ENCODE measurements at regions of chr7 and their contacts with region 1.

Region 1: GRCh38 chr7:74206589-74207120 is 3.2 kb upstream of the LAT2 start:
- DNase-seq: peak; percentile 58 to 77 (median 68)
- H3K4me3 ChIP-seq: no peak overlapping the region
- H3K4me3 Mint-ChIP-seq: peak overlapping the region in 6 of 8 donors; percentile 21 to 65 (median 54)
- H3K27ac ChIP-seq: no peak overlapping the region
- H3K27ac Mint-ChIP-seq: peak overlapping the region in 1 of 7 donors; percentile 73
- H3K4me1 ChIP-seq: peaks cover 16% of the 10 kb centered on the region
- H3K4me1 Mint-ChIP-seq: peaks cover 7 to 25% (median 13%) of the 10 kb centered on the region in 4 donors
- H3K27me3 ChIP-seq: no peaks in the 10 kb centered on the region
- H3K27me3 Mint-ChIP-seq: no peaks in the 10 kb centered on the region

Region 2: DNA sequence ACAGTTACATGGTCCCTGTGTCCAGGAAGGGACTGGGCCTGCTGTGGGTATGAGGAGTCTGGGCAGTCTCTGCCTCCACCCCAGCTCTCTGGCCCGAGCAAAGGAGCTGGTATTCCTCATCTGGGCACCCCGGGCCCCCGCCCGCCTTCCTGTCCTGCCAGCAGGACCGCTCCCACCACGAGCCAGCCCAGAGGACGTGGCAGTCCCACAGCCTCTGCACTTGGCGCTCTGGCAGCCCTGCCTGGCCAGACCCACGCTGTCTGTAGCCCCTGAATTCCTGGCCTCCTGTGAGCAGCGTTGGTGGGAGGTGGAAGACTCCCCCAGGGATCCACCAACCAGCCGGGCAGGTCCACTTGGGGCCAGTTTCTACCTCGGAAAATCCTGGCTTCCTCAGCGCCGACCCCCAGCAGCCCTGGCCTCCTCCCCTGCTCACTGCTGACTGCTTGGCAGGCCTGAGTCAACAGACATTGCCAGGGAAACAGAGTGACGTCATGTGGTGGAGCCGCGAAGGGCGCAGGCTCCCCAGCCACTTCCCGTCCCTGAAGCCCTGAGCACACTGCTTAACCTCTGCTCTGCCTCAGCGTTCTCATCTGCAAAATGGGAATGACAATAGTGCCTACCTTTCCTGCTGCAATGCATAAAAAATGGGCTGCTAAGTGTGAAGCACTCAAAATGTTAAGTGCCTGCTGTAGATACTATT is 144.7 kb before region 1 on chr7:
- CTCF ChIA-PET with region 1: interaction called, 16 read pairs
- POLR2A ChIA-PET with region 1: no interaction called
- intact Hi-C with region 1: loop called (anchors 1 kb)
- DNase-seq: peak; percentile 76 to 85 (median 83)
- H3K4me3 ChIP-seq: no peak overlapping the region
- H3K4me3 Mint-ChIP-seq: peak overlapping the region; percentile 46 to 78 (median 60)
- H3K27ac ChIP-seq: peak overlapping the region; percentile 46
- H3K27ac Mint-ChIP-seq: peak overlapping the region; percentile 92 to 99 (median 97)
- H3K4me1 ChIP-seq: peaks cover 10% of the 10 kb centered on the region
- H3K4me1 Mint-ChIP-seq: peaks cover 5 to 7% (median 6%) of the 10 kb centered on the region in 4 donors
- H3K27me3 ChIP-seq: no peaks in the 10 kb centered on the region
- H3K27me3 Mint-ChIP-seq: peaks cover 4 to 11% of the 10 kb centered on the region in 2 donors

Region 3: GRCh38 chr7:74173866-74174605 is 32.6 kb before region 1 on chr7 and contains the start of gene EIF4H:
- CTCF ChIA-PET with region 1: interaction called, 20 read pairs
- POLR2A ChIA-PET with region 1: interaction called, 8 read pairs
- intact Hi-C with region 1: no loop called
- DNase-seq: peak; percentile 93 to 95 (median 93)
- H3K4me3 ChIP-seq: peak within 1 kb of the TSS; percentile 87 to 89
- H3K4me3 Mint-ChIP-seq: peak within 1 kb of the TSS; percentile 88 to 94 (median 92)
- H3K27ac ChIP-seq: peak within 1 kb of the TSS; percentile 91
- H3K27ac Mint-ChIP-seq: peak within 1 kb of the TSS; percentile 90 to 97 (median 96)
- H3K4me1 ChIP-seq: peaks cover 48% of the 10 kb centered on the region
- H3K4me1 Mint-ChIP-seq: peaks cover 34 to 57% (median 44%) of the 10 kb centered on the region in 4 donors
- H3K27me3 ChIP-seq: no peaks in the 10 kb centered on the region
- H3K27me3 Mint-ChIP-seq: no peaks in the 10 kb centered on the region
- total RNA-seq, gene EIF4H: 167 to 168 TPM

Region 4: GRCh38 chr7:74193054-74193453 is 13.6 kb before region 1 on chr7:
- CTCF ChIA-PET with region 1: interaction called, 12 read pairs
- POLR2A ChIA-PET with region 1: no interaction called
- intact Hi-C with region 1: no loop called
- DNase-seq: no peak
- H3K4me3 ChIP-seq: no peak overlapping the region
- H3K4me3 Mint-ChIP-seq: no peak overlapping the region
- H3K27ac ChIP-seq: no peak overlapping the region
- H3K27ac Mint-ChIP-seq: peak overlapping the region in 2 of 7 donors; percentile 14 to 63
- H3K4me1 ChIP-seq: no peaks in the 10 kb centered on the region
- H3K4me1 Mint-ChIP-seq: peaks cover under 1 to 6% (median 3%) of the 10 kb centered on the region in 4 donors
- H3K27me3 ChIP-seq: no peaks in the 10 kb centered on the region
- H3K27me3 Mint-ChIP-seq: no peaks in the 10 kb centered on the region

Region 5: GRCh38 chr7:74254129-74254857 is 47.6 kb after region 1 on chr7 and contains the start of gene RFC2:
- CTCF ChIA-PET with region 1: interaction called, 15 read pairs
- POLR2A ChIA-PET with region 1: no interaction called
- intact Hi-C with region 1: loop called (anchors 2 kb)
- DNase-seq: peak; percentile 93 to 99 (median 96)
- H3K4me3 ChIP-seq: peak within 1 kb of the TSS; percentile 81 to 100
- H3K4me3 Mint-ChIP-seq: peak within 1 kb of the TSS; percentile 91 to 97 (median 94)
- H3K27ac ChIP-seq: peak within 1 kb of the TSS; percentile 92
- H3K27ac Mint-ChIP-seq: peak within 1 kb of the TSS; percentile 94 to 97 (median 96)
- H3K4me1 ChIP-seq: peaks cover 22% of the 10 kb centered on the region
- H3K4me1 Mint-ChIP-seq: peaks cover 16 to 37% (median 23%) of the 10 kb centered on the region in 4 donors
- H3K27me3 ChIP-seq: no peaks in the 10 kb centered on the region
- H3K27me3 Mint-ChIP-seq: no peaks in the 10 kb centered on the region
- total RNA-seq, gene RFC2: 15.7 to 17.7 TPM

Region 6: GRCh38 chr7:74569501-74570075 is 362.9 kb after region 1 on chr7:
- CTCF ChIA-PET with region 1: no interaction called
- POLR2A ChIA-PET with region 1: no interaction called
- intact Hi-C with region 1: loop called (anchors 10 kb)
- DNase-seq: peak; percentile 36 to 66 (median 51)
- H3K4me3 ChIP-seq: no peak overlapping the region
- H3K4me3 Mint-ChIP-seq: peak overlapping the region; percentile 25 to 85 (median 74)
- H3K27ac ChIP-seq: no peak overlapping the region
- H3K27ac Mint-ChIP-seq: peak overlapping the region; percentile 85 to 97 (median 95)
- H3K4me1 ChIP-seq: peaks cover 11% of the 10 kb centered on the region
- H3K4me1 Mint-ChIP-seq: peaks cover 6 to 19% (median 14%) of the 10 kb centered on the region in 4 donors
- H3K27me3 ChIP-seq: no peaks in the 10 kb centered on the region
- H3K27me3 Mint-ChIP-seq: no peaks in the 10 kb centered on the region